ENCODE measurements at regions of chr1 and their contacts with region 1.

Region 1: GRCh38 chr1:160291248-160292220 is 6.6 kb upstream of the PEX19 start:
- DNase-seq: peak; percentile 51
- H3K4me3 ChIP-seq: no peak overlapping the region
- H3K27ac ChIP-seq: no peak overlapping the region
- H3K4me1 ChIP-seq: no peaks in the 10 kb centered on the region
- H3K27me3 ChIP-seq: no peaks in the 10 kb centered on the region
- CTCF ChIP-seq: peak; percentile 78 to 84

Region 2: GRCh38 chr1:160108888-160109662 is 182.5 kb before region 1 on chr1:
- CTCF ChIA-PET with region 1: interaction called, 3 read pairs
- dilution Hi-C with region 1: loop called (anchors 5 kb)
- in situ Hi-C with region 1: no loop called
- intact Hi-C with region 1: no loop called
- DNase-seq: no peak
- H3K4me3 ChIP-seq: no peak overlapping the region
- H3K27ac ChIP-seq: no peak overlapping the region
- H3K4me1 ChIP-seq: no peaks in the 10 kb centered on the region
- H3K27me3 ChIP-seq: no peaks in the 10 kb centered on the region
- CTCF ChIP-seq: peak; percentile 44 to 51

Region 3: GRCh38 chr1:160328184-160328583 is 36.6 kb after region 1 on chr1:
- CTCF ChIA-PET with region 1: no interaction called
- dilution Hi-C with region 1: loop called (anchors 5 kb)
- in situ Hi-C with region 1: no loop called
- intact Hi-C with region 1: loop called (anchors 5 kb)
- DNase-seq: no peak
- H3K4me3 ChIP-seq: no peak overlapping the region
- H3K27ac ChIP-seq: no peak overlapping the region
- H3K4me1 ChIP-seq: no peaks in the 10 kb centered on the region
- H3K27me3 ChIP-seq: no peaks in the 10 kb centered on the region
- CTCF ChIP-seq: no peak

Measured in mammary epithelial cell (primary cell).